Endothelial cell of umbilical vein (primary cell): ENCODE measurements at regions of chr2 and their contacts with region 1.

Region 1: DNA sequence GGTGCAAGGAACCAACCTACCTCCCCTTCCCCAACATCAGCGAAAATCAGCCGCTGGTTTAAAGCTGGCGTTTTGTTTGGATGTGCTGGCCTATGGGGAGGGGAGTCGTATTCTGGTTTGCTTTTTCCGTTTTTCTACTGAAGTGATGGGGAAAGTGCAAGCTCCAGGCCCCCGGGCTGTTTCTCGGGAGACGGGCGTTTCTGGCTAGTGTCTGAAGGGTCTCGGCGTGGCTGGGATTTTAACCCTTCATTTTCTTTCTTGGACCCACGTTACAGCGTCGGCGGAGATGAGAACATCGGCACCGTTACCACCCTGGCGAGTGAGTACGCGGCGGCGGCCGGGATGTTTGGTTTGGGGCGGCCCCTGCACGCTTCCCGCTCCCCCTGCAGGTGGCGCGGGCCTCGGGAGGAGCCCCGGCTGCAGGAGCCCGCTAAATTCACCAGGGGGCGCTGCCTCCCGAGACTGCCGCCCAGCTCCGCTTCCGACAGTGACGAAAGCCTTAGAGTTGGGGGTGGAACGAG is 70.7 kb downstream of the PLB1 start:
- DNase-seq: peak; percentile 85
- H3K4me3 ChIP-seq: peak overlapping the region; percentile 42 to 71 (median 58)
- H3K27ac ChIP-seq: no peak overlapping the region
- H3K4me1 ChIP-seq: peaks cover 2% of the 10 kb centered on the region
- H3K27me3 ChIP-seq: no peaks in the 10 kb centered on the region
- CTCF ChIP-seq: peak; percentile 98 to 100
- POLR2A ChIP-seq: no peak

Region 2: DNA sequence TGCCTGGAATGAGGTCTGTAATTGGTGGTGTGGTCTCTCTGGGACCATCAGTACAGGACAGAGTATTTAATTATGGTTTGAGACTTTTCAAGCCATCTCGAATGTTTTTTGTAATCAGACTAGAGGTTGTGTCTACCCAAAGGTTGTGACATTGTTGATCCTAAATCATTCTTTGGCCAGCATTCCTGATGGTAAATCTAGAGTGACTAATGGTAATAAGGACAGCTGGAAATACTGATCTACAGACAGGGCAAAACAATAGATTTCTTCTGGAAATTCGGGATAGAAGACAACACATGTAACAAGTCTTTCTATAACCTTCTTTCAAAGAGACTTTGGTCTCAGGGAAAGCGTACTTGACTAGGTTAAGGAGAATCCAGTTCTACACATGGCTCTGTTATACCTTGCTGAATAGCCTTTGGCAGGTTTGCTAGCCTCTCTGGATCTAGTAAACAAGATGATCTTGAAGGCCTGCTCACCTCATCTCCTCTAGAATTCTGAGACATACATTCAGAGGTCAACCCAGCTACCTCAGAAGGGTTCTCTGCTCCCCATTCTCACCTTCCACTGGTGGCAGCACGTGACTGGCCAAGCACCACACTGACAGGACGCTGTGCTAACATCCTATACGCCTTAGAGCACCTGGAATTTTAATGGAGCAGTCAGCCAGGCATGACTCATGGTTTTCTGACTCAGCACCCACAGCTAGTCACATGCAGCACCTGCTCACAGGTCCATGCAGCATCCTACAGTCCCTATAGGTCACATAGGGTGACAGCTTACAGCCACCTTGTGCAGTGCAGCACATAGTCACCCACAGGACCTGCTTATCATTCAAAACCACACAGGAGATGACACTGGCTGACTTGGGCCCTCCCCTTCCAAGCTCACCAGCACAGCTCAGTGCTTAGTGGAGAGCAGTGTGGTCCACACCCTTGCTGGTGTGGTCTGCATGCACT is 58.5 kb before region 1 on chr2:
- CTCF ChIA-PET with region 1: no interaction called
- POLR2A ChIA-PET with region 1: no interaction called
- dilution Hi-C with region 1: no loop called
- intact Hi-C with region 1: no loop called
- DNase-seq: no peak
- H3K4me3 ChIP-seq: no peak overlapping the region
- H3K27ac ChIP-seq: no peak overlapping the region
- H3K4me1 ChIP-seq: no peaks in the 10 kb centered on the region
- H3K27me3 ChIP-seq: peaks cover 16 to 30% of the 10 kb centered on the region in 2 experiments
- CTCF ChIP-seq: no peak
- POLR2A ChIP-seq: no peak

Region 3: DNA sequence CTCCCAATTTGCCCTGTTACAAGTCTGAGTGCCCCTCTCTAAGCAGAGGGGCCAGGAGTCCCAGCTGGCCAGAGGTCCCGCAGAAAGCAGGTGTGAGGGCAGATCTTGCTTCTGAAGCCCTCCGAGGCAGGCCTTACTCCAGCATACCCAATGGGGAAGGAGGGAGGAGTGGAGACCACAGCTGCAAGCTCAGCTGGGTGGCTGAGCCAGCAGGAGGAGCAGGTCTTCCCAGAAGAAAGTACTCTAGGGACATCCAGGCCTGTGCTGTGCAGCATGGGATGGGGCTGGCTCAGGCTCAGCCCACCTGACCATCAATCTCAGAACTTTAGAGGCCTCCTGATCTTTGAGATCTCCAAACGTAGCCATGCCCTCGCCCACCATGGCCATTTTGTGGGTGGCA is 39.4 kb before region 1 on chr2:
- CTCF ChIA-PET with region 1: no interaction called
- POLR2A ChIA-PET with region 1: no interaction called
- dilution Hi-C with region 1: no loop called
- intact Hi-C with region 1: no loop called
- DNase-seq: no peak
- H3K4me3 ChIP-seq: no peak overlapping the region
- H3K27ac ChIP-seq: no peak overlapping the region
- H3K4me1 ChIP-seq: no peaks in the 10 kb centered on the region
- H3K27me3 ChIP-seq: peaks cover 11 to 21% of the 10 kb centered on the region in 2 experiments
- CTCF ChIP-seq: no peak
- POLR2A ChIP-seq: no peak

Region 4: DNA sequence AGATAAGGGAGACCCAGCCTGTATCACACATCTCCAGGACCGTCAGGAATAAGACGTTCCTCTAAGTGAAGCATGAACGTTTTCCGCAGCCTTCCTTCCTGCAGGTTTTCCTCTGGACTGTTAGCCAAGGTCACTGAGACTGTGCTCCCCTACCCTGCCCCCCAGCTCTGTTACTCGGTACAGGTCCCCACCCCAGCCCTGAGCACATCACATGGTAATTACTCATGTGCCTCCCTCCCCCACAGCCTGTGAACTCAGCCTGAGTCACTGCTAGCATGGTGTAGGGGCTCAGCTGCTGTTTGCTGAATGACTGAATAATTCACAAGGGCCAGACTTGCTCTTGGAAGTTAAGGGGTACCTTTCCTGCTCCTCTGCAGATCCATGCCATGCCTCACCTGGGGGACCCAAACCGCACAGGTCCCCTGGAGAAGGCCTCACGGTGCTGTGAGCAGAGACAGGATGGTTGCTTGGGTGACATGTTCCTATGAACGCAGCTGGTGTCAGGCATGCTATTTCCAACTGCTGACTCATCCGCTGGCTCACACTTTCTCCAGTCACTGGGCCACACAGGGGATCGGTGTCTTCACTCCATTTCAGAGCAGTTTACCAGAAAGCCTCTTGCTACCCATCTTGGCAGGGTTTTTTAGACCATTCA is 17.4 kb after region 1 on chr2:
- CTCF ChIA-PET with region 1: interaction called, 14 read pairs
- POLR2A ChIA-PET with region 1: no interaction called
- dilution Hi-C with region 1: no loop called
- intact Hi-C with region 1: loop called (anchors 1 kb)
- DNase-seq: peak; percentile 98
- H3K4me3 ChIP-seq: no peak overlapping the region
- H3K27ac ChIP-seq: peak overlapping the region; percentile 91
- H3K4me1 ChIP-seq: peaks cover 23% of the 10 kb centered on the region
- H3K27me3 ChIP-seq: no peaks in the 10 kb centered on the region
- CTCF ChIP-seq: no peak
- POLR2A ChIP-seq: peak; percentile 36

Region 5: DNA sequence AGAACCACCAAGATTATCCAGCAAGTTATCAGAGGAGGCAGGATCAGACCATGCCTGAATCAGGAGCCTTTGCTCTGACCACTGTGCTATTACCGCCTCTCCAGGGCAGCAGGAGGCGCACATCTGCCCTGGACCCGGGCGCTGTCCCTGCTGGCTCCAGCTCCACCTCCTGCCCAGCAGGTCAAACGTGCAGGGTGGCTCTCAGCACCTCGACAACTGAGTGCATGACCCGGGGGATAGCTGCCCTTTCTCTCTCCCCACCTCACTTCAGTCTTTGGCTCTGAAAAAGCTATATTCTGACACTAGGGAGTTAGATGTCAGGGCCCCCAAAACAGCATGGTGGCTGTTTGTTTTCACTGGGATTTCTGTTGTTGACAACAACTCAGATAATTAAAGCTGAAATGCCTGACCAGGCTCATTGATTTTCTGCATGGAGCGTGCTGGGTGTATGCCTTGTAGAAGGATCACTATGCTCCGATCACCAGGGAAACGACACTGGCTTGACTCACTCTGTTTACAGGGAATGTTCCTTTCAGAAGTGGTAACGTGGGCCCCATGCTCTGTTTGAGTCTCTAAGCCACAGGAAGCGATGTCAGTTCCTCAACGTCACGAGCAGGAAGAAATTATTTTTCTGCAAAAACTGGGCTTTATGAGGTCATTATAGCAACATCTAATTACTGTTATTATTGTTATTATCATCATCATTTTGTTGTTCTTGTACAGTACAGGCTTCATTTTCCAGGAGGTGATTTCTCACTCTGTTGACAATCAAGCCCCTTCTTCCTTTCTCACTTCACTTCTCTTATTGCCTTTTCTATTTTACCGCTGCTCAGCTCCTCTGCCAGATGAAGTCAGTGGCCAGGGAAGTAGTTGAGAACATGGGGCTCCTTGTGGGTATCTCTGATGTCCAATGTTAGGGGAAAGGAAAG is 54.9 kb after region 1 on chr2:
- CTCF ChIA-PET with region 1: interaction called, 9 read pairs
- POLR2A ChIA-PET with region 1: no interaction called
- dilution Hi-C with region 1: no loop called
- intact Hi-C with region 1: loop called (anchors 1 kb)
- DNase-seq: peak; percentile 99
- H3K4me3 ChIP-seq: no peak overlapping the region
- H3K27ac ChIP-seq: peak overlapping the region; percentile 97
- H3K4me1 ChIP-seq: peaks cover 22% of the 10 kb centered on the region
- H3K27me3 ChIP-seq: no peaks in the 10 kb centered on the region
- CTCF ChIP-seq: peak; percentile 48 to 67
- POLR2A ChIP-seq: peak; percentile 74

Region 6: DNA sequence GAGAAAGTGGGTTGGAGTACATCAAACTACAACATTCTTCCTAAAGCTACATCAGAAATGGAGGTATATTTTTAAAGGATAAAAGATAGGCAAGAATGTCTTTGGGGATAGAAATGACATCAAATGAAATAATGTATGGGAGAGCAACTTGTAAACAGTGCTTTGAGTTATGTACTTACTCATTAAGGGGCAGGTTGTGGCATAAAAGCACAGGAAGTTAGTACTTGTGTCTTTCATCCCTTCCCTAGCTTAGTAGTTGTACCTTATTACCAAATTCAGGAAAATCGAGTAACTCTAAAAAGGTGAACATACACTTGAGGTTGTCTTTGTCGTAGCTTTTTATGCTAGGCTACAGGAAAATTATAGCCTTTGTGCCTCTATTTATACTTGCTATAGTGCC is 213.9 kb after region 1 on chr2:
- CTCF ChIA-PET with region 1: interaction called, 11 read pairs
- POLR2A ChIA-PET with region 1: no interaction called
- dilution Hi-C with region 1: no loop called
- intact Hi-C with region 1: no loop called
- DNase-seq: no peak
- H3K4me3 ChIP-seq: no peak overlapping the region
- H3K27ac ChIP-seq: no peak overlapping the region
- H3K4me1 ChIP-seq: no peaks in the 10 kb centered on the region
- H3K27me3 ChIP-seq: no peaks in the 10 kb centered on the region
- CTCF ChIP-seq: no peak
- POLR2A ChIP-seq: no peak

Region 7: DNA sequence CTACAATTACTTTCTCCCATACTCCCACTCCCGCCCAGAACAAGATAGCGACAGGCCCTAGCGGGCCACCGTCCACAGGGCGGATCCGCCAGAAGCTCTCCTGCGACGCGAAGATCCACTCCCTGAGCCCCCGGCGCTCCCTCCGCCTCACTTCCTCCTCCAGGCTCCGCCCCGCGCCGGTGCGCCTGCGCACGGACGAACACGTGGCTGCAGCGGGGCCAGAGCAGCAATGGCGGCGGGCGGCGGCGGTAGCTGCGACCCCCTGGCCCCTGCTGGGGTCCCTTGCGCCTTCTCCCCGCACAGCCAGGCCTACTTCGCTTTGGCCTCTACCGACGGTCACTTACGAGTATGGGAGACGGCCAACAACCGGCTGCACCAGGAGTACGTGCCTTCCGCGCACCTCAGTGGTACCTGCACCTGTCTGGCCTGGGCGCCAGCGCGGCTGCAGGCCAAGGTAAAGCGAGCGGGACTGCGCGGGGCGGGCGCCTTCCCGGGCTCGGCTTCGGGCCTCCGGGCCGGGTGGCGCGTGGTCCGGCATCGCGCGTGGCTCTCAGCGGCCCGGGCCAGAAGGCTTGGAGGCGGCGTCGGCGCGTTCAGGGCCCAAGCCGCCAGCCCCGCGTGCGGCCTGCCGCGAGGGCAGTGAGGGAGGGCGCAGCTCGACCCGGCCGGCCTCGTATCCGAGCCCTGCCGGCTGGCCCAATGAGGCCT is 328.0 kb after region 1 on chr2 and contains the start of gene WDR43:
- CTCF ChIA-PET with region 1: interaction called, 4 read pairs
- POLR2A ChIA-PET with region 1: no interaction called
- dilution Hi-C with region 1: no loop called
- intact Hi-C with region 1: loop called (anchors 1 kb)
- DNase-seq: peak; percentile 100
- H3K4me3 ChIP-seq: peak within 1 kb of the TSS; percentile 93 to 98 (median 94)
- H3K27ac ChIP-seq: peak within 1 kb of the TSS; percentile 84
- H3K4me1 ChIP-seq: peaks cover 26% of the 10 kb centered on the region
- H3K27me3 ChIP-seq: no peaks in the 10 kb centered on the region
- CTCF ChIP-seq: no peak
- POLR2A ChIP-seq: peak; percentile 89
- total RNA-seq, gene WDR43: 60.6 and 65.0 TPM in 2 replicates

Region 8: GRCh38 chr2:29196792-29197788 is 630.5 kb after region 1 on chr2:
- CTCF ChIA-PET with region 1: no interaction called
- POLR2A ChIA-PET with region 1: no interaction called
- dilution Hi-C with region 1: no loop called
- intact Hi-C with region 1: loop called (anchors 2 kb)
- DNase-seq: peak; percentile 56
- H3K4me3 ChIP-seq: no peak overlapping the region
- H3K27ac ChIP-seq: no peak overlapping the region
- H3K4me1 ChIP-seq: peaks cover 6% of the 10 kb centered on the region
- H3K27me3 ChIP-seq: no peaks in the 10 kb centered on the region
- CTCF ChIP-seq: peak; percentile 77
- POLR2A ChIP-seq: no peak

Region 9: DNA sequence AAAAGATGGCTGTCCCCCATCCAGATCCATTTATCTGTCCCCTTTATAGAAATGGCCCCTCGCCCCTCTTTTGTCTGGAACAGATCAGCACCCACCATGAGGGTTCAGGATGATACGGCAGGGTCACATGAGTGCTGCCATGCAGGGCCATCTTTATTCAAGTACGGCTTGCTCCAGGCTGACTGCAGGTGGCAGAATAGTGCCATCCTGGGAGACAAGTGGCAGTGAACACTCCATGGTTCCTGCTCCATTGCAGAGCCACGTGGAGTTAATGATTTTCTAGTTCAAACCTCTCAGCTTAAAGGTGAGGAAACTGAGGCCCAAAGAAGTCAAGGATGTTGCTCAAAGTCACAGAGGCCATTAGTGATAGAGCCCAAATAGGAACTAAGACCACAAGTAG is 729.3 kb after region 1 on chr2:
- CTCF ChIA-PET with region 1: no interaction called
- POLR2A ChIA-PET with region 1: no interaction called
- dilution Hi-C with region 1: no loop called
- intact Hi-C with region 1: no loop called
- DNase-seq: no peak
- H3K4me3 ChIP-seq: no peak overlapping the region
- H3K27ac ChIP-seq: no peak overlapping the region
- H3K4me1 ChIP-seq: no peaks in the 10 kb centered on the region
- H3K27me3 ChIP-seq: no peaks in the 10 kb centered on the region
- CTCF ChIP-seq: no peak
- POLR2A ChIP-seq: no peak